Sciatic nerve (tissue), 2 donors: ENCODE measurements at regions of chr11 and their contacts with region 1.

Region 1: DNA sequence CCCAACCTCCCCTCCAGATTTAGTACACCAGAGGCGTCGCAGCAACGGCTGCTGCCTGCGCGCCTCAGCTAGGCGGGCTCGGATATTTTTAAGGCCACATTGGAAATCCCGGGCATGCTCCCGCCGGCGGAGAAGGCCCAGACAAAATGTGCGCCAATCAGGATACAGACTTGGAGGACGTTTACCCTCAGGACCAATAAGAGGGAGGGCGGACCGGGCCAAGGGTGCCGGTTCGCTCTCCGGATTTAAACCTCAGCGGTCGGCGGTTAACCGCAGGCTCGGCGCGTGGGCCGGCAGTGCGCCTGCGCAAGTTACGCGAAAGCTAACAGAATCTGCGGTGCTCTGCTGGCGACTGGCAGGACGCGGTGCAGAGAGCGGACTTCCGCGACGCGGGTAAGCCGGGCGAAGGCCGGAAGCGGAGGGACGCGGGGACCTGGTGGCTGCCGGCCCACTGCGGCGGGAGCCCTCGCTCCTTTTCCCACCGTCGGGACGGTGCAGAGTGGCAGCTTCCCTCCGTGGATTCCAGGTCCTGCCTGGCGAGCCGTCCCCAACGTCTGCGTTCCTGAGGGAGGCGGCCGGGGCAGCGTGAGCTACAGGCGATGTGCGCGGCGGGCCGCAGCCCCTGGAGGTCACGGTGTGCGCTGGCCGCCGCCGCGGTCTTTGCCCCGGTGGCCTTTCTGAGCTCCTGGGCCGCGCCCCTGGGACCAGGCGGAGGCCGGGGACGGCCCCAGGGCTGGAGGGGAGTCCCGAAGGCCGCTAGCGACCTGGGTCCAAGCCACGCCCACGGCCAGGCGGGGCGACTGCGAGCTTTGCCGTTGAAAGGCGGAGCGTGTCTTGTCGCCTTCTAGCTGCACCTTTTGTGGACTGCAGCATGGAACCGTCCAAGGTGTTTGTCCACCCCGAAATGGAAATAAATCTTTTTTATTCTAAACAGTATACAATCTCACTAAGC is at the start of gene HYLS1:
- DNase-seq: peak; percentile 95
- ATAC-seq: peak; percentile 99
- total RNA-seq, gene HYLS1: 4.1 TPM

Region 2: GRCh38 chr11:124953753-124954589 is 933.7 kb before region 1 on chr11 and contains the start of gene CCDC15:
- intact Hi-C with region 1: loop called (anchors 10 kb)
- DNase-seq: peak; percentile 98
- ATAC-seq: peak; percentile 100
- total RNA-seq, gene CCDC15: 2.8 TPM

Region 3: DNA sequence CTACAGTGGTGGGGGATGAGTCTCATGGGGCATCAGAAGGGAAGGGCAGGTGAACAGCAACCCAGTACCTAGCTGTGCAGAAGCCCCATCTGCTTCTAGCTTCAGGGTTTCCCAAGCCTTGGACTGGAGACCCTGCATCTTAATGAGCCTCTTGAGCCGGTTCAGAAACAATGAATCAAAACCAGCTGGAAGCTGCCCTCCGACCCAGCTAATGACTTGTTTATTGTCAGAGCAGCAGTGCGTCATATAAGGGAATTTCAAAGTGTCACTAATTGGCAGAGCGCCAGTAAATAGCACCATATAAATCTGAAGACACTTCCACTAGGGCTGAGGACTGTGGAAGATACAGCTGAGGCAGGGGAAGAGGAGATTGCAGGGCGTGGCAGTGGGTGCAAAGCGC is 266.3 kb after region 1 on chr11:
- intact Hi-C with region 1: no loop called
- DNase-seq: no peak
- ATAC-seq: no peak